ENCODE measurements at regions of chr16 and their contacts with region 1.

Region 1: DNA sequence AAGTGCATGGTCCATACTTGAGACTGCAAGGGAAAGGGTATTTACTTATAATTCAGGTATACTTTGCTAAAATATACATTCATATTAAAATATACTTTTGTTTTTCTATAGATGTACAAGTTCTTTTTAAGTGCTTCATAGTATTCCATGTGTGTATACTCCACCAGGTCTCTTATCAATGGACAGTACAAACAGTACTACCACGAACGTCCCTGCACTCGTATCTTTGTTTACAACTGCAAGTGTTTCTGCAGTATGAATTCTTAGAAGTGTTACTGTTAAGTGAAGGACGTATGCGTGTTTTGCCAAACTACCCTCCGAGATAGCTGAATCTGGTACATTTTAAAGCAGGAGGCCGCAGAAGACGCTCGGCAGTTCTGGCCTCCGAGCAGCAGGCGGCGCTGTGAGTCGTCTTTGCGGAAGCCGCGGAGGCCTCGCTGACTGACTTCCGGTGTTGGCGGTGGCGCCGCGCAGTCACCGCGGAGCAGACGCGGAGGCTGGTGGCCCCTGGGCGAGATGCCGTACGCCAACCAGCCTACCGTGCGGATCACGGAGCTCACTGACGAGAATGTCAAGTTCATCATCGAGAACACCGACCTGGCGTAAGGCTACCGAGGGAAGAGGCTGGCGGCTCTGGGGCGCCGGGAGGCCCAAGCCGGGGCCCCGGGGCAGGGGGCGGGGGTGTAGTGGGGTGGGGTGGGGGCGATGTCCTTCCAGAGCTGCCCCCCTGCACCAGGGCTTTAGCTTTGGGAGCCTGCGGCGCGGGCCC is at the start of gene POLR2C:
- DNase-seq: peak; percentile 93
- H3K4me3 Mint-ChIP-seq: peak within 1 kb of the TSS; percentile 99
- H3K27ac Mint-ChIP-seq: peak within 1 kb of the TSS; percentile 96
- H3K4me1 Mint-ChIP-seq: peaks cover 36% of the 10 kb centered on the region
- H3K27me3 Mint-ChIP-seq: no peaks in the 10 kb centered on the region
- total RNA-seq, gene POLR2C: 47.8 to 48.8 TPM

Region 2: DNA sequence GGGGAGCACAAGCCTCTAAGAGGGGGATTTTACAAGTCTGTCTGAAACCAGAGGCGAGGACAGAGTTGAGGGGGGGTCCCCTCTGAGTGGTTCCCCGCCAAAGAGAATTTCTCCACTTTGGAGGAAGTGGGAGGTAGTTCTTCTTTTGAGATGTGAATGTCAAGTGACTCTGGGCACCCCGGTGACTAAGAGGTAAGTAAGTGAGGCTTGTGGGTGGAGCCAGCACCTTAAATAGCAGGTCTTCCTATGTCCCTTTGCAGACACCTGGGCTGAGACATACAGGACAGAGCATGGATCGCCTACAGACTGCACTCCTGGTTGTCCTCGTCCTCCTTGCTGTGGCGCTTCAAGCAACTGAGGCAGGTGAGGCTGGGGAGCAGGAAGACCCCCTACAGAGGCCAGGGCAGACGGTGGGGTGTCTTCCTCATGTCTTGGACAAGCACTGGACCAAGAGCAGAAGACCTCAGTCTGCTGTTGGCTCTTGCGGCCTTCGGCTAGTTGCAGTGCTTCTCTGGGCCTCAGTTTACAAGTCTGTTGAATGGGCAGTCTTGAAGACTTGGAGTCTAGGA is 103.8 kb before region 1 on chr16 and contains the start of gene CCL22:
- CTCF ChIA-PET with region 1: no interaction called
- POLR2A ChIA-PET with region 1: no interaction called
- DNase-seq: no peak
- H3K4me3 Mint-ChIP-seq: no peak within 1 kb of the TSS
- H3K27ac Mint-ChIP-seq: no peak within 1 kb of the TSS
- H3K4me1 Mint-ChIP-seq: no peaks in the 10 kb centered on the region
- H3K27me3 Mint-ChIP-seq: peaks cover 6% of the 10 kb centered on the region
- total RNA-seq, gene CCL22: 0.10 TPM in 1 of 2 experiments, not detected in the other

Region 3: DNA sequence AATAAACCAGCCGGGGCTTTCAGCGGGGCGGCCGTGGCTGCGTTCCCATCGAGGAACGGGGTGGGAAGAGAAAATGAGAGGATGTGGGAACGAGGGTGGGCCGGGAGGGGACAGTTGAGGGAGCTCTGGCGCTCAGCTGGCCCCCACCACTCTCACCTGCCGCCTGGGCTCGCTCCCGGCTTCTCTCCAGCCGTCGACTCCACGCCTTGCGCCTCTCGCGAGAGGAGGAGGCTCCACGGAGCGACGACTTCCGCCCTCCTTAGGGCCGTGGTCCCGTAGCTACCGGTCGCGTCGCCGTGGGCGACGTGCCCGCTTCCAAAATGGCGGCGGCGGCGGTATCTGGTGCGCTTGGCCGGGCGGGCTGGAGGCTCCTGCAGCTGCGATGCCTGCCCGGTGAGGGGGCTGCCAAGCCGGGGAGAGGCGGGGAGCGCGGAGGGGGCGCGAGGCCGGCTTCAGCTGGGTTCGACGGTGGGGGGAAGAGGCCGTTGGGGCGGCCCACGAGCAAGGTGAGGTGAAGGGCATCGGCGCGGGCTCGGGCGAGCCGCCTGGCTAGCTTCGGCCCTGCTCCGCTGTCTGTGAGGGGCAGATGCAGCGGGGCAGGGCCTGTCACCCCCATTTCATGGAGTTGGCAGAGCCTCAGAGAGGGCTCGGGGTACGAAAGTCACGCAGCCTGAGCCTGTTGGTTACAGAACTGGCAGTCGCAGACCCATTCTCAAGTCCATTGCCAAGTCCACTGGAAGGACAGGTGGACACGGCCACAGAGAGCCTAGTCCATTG is 15.0 kb before region 1 on chr16 and contains the starts of genes CIAPIN1 and COQ9:
- CTCF ChIA-PET with region 1: interaction called, 45 read pairs
- POLR2A ChIA-PET with region 1: interaction called, 65 read pairs
- DNase-seq: peak; percentile 95
- H3K4me3 Mint-ChIP-seq: peak within 1 kb of the TSS; percentile 91
- H3K27ac Mint-ChIP-seq: peak within 1 kb of the TSS; percentile 83
- H3K4me1 Mint-ChIP-seq: peaks cover 33% of the 10 kb centered on the region
- H3K27me3 Mint-ChIP-seq: no peaks in the 10 kb centered on the region
- total RNA-seq, gene CIAPIN1: 35.8 to 36.1 TPM
- total RNA-seq, gene COQ9: 28.5 to 29.0 TPM

Region 4: DNA sequence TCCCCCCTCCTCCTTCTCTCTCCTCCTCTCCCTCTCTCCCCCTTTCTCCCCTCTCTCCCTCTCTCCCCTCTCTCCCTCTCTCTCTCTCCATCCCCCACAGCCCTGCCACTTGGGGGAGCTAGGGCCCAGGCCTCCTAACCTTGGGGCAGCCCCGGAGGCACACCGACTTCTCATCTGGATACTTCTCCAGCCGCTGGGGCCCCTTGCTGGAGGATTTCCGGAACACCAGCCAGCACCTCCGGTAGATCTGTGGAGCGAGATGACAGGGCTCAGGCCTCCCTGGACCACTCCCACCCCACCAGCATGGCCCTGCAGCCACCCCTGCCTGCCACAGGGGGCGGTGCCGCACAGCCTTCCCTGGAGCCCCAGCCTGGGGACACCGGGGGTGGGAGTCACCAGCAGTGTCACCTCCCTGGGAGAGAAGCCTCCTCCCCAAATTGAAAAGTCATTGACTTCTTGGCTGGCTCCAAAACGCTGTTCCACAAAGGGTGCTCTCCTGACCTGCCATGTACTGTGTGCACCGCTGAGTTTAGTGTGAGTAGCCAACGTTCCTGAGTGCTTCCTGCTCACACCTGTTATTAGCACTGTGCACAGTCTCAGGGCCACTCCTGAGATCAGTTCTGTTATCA is 13.4 kb after region 1 on chr16:
- CTCF ChIA-PET with region 1: interaction called, 20 read pairs
- POLR2A ChIA-PET with region 1: interaction called, 30 read pairs
- DNase-seq: peak; percentile 86
- H3K4me3 Mint-ChIP-seq: no peak overlapping the region
- H3K27ac Mint-ChIP-seq: peak overlapping the region; percentile 18
- H3K4me1 Mint-ChIP-seq: peaks cover 18% of the 10 kb centered on the region
- H3K27me3 Mint-ChIP-seq: no peaks in the 10 kb centered on the region

Region 5: GRCh38 chr16:57485916-57486857 is 23.8 kb after region 1 on chr16 and contains the start of gene DOK4:
- CTCF ChIA-PET with region 1: interaction called, 12 read pairs
- POLR2A ChIA-PET with region 1: interaction called, 15 read pairs
- DNase-seq: peak; percentile 80
- H3K4me3 Mint-ChIP-seq: peak within 1 kb of the TSS; percentile 75
- H3K27ac Mint-ChIP-seq: peak within 1 kb of the TSS; percentile 40
- H3K4me1 Mint-ChIP-seq: peaks cover 18% of the 10 kb centered on the region
- H3K27me3 Mint-ChIP-seq: peaks cover 11% of the 10 kb centered on the region
- total RNA-seq, gene DOK4: 2.5 to 3.4 TPM

Region 6: DNA sequence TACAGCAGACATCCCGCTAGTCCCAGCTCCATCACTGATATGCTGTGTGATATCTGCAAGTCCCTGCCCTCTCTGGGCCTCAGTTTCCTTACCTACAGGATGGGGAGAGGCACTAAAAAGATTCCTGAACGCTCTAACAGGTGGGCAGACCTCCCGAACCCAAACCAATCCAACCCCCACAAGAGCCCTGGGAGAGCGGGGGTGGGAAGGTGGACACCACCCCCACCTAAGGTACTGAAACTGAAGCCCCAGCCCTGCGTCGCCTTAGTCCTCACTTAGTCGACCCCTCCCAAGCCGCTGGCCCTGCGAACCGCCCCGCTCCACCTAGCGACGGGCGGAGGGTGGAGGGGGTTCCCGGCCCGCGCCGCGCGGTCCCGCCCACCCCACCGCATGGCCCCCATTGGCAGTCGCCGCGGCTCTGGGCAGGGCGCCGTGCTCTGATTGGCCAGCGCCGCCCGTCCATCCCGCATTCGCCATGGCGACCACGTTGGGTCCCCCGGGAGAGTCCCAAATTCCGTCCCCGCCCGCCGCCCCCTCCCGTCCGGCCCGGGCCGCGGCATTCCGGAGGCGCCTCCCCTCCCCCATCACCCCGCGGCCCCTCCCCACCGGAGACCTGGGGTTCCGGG is 73.4 kb after region 1 on chr16:
- CTCF ChIA-PET with region 1: interaction called, 5 read pairs
- POLR2A ChIA-PET with region 1: interaction called, 15 read pairs
- DNase-seq: peak; percentile 95
- H3K4me3 Mint-ChIP-seq: peak overlapping the region; percentile 79
- H3K27ac Mint-ChIP-seq: peak overlapping the region; percentile 80
- H3K4me1 Mint-ChIP-seq: peaks cover 79% of the 10 kb centered on the region
- H3K27me3 Mint-ChIP-seq: no peaks in the 10 kb centered on the region

Region 7: GRCh38 chr16:57667526-57668258 is 205.3 kb after region 1 on chr16:
- CTCF ChIA-PET with region 1: no interaction called
- POLR2A ChIA-PET with region 1: no interaction called
- DNase-seq: no peak
- H3K4me3 Mint-ChIP-seq: no peak overlapping the region
- H3K27ac Mint-ChIP-seq: no peak overlapping the region
- H3K4me1 Mint-ChIP-seq: no peaks in the 10 kb centered on the region
- H3K27me3 Mint-ChIP-seq: peaks cover 18% of the 10 kb centered on the region

Region 8: DNA sequence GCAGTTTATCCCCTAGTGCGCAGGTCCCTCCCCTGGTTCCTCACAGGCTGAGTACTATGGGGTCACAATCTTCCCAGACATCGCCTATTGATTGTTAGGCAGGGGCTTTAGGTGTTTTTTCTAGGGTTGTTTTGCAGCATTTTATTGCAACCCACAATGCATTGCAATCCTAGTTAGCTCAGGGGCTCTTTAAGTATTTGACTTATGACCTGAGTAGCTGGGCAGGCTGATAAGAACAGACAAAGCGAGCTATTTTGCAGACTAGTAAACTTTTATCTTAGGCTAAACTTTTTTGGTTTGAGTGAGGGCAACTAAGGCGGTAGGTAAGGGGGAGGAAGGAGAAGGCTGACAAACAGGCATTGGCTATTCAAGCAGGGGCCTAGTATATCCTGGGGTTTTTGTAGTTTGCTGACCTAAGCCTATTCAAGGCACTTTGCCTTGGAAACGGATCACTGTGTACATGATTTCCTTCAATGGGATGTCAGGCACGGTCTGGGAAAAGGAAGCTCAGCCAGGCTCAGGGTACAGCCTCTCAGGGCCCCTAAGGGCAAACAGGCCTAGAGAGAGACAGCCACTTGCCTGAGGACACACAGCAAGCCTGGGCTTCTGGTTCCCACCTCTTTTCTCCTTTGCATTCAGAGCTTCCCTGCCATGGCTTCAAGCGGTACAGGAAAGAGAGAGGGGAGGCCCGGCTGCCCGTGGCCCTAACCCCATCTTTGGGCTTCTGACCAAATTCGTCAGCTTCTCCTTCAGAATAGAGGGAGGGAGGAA is 238.6 kb after region 1 on chr16:
- CTCF ChIA-PET with region 1: no interaction called
- POLR2A ChIA-PET with region 1: no interaction called
- DNase-seq: no peak
- H3K4me3 Mint-ChIP-seq: no peak overlapping the region
- H3K27ac Mint-ChIP-seq: no peak overlapping the region
- H3K4me1 Mint-ChIP-seq: peaks cover 2% of the 10 kb centered on the region
- H3K27me3 Mint-ChIP-seq: peaks cover 10% of the 10 kb centered on the region

Region 9: GRCh38 chr16:57742543-57742942 is 280.1 kb after region 1 on chr16:
- CTCF ChIA-PET with region 1: no interaction called
- POLR2A ChIA-PET with region 1: no interaction called
- DNase-seq: no peak
- H3K4me3 Mint-ChIP-seq: no peak overlapping the region
- H3K27ac Mint-ChIP-seq: no peak overlapping the region
- H3K4me1 Mint-ChIP-seq: peaks cover 5% of the 10 kb centered on the region
- H3K27me3 Mint-ChIP-seq: no peaks in the 10 kb centered on the region